Transverse colon (tissue), 4 donors: ENCODE measurements at regions of chr15 and their contacts with region 1.

Region 1: DNA sequence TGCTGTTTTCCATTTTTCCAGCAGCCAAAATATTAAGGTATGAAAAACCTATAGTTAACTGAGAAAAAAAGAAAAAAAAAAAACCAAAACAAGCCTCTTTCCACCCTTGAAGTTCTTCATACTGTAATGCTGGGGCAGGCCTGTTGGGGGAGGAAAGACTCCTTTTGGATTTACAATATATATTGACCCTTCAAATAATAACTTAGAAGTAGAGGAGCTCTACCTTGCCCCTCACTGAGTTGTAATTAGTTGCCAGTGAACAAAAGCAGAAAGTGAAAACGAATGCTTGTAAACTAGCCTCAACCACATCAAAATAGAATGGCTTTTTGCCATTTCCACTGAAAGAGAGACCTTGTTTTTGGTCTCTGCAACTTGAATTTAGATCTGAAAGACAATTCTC is 326.6 kb downstream of the NR2F2 start:
- DNase-seq: no peak
- H3K4me3 ChIP-seq: no peak overlapping the region
- H3K27ac ChIP-seq: no peak overlapping the region
- H3K4me1 ChIP-seq: no peaks in the 10 kb centered on the region
- H3K27me3 ChIP-seq: no peaks in the 10 kb centered on the region
- CTCF ChIP-seq: no peak
- EP300 ChIP-seq: no peak
- POLR2A ChIP-seq: no peak

Region 2: DNA sequence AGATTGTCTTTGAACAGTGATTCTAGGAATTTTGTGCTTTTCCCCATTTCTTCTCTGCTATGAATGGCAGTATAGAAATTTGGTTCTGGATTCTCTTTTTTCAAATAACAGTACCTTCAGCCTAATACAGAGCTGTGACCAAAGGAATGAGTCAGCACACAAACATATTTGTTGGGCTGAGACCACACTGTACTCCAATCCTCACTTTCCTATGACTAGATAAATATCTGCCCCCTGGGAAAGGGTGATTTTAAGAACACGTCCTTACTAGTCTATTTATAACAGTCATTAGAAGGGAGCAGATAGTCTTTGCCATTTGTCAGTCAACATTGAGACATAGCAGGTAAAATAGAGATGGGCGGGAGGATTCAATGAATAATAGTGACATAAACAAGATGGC is 1964.4 kb before region 1 on chr15:
- in situ Hi-C with region 1: no loop called
- intact Hi-C with region 1: loop called (anchors 5 kb)
- DNase-seq: no peak
- H3K4me3 ChIP-seq: no peak overlapping the region
- H3K27ac ChIP-seq: no peak overlapping the region
- H3K4me1 ChIP-seq: no peaks in the 10 kb centered on the region
- H3K27me3 ChIP-seq: no peaks in the 10 kb centered on the region
- CTCF ChIP-seq: no peak
- EP300 ChIP-seq: no peak
- POLR2A ChIP-seq: no peak